Breast epithelium (tissue), 4 donors: ENCODE measurements at regions of chr19 and their contacts with region 1.

Region 1: GRCh38 chr19:6030214-6030507 is 52.2 kb upstream of the RANBP3 start:
- DNase-seq: no peak
- H3K4me3 ChIP-seq: no peak overlapping the region
- H3K27ac ChIP-seq: no peak overlapping the region
- H3K4me1 ChIP-seq: no peaks in the 10 kb centered on the region
- H3K27me3 ChIP-seq: no peaks in the 10 kb centered on the region
- CTCF ChIP-seq: no peak
- POLR2A ChIP-seq: no peak

Region 2: DNA sequence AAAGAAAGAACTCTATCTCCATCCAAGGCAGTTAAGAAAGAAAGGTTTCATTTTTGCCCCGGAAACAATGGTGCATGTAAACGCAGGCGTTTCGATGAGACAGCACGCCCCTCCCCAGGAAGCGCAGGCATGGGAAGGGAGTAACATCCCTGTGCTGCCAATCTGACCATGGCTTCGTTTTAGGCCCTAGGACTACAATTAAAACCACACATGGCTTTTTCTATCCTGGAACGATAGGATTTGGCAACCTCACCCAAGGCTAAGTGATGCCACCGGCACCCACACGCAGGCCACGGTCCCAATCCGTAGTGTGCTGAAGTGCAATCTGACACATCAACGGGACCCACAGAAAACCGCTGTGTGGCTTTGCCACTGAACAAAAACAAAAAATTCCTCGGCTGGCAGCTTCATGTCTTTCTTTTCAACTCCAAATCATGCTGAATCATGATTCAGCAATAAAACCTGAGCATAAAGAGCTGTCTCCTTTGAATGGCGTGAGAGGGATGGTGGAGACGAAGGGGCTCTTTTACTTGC is 76.4 kb before region 1 on chr19:
- intact Hi-C with region 1: no loop called
- DNase-seq: no peak
- H3K4me3 ChIP-seq: no peak overlapping the region
- H3K27ac ChIP-seq: peak overlapping the region; percentile 11 to 40
- H3K4me1 ChIP-seq: peaks cover 0 to 7% of the 10 kb centered on the region in 2 donors
- H3K27me3 ChIP-seq: no peaks in the 10 kb centered on the region
- CTCF ChIP-seq: no peak
- POLR2A ChIP-seq: no peak

Region 3: GRCh38 chr19:6007866-6008265 is 22.3 kb before region 1 on chr19:
- intact Hi-C with region 1: loop called (anchors 1 kb)
- DNase-seq: no peak
- H3K4me3 ChIP-seq: no peak overlapping the region
- H3K27ac ChIP-seq: no peak overlapping the region
- H3K4me1 ChIP-seq: no peaks in the 10 kb centered on the region
- H3K27me3 ChIP-seq: no peaks in the 10 kb centered on the region
- CTCF ChIP-seq: no peak
- POLR2A ChIP-seq: no peak